ENCODE measurements at regions of chr20 and their contacts with region 1.

Region 1: GRCh38 chr20:56380375-56380774 is 11.6 kb downstream of the AURKA start:
- DNase-seq: no peak
- ATAC-seq: no peak
- H3K4me3 Mint-ChIP-seq: no peak overlapping the region
- H3K27ac Mint-ChIP-seq: no peak overlapping the region
- H3K4me1 Mint-ChIP-seq: peaks cover 9% of the 10 kb centered on the region
- H3K27me3 Mint-ChIP-seq: no peaks in the 10 kb centered on the region

Region 2: DNA sequence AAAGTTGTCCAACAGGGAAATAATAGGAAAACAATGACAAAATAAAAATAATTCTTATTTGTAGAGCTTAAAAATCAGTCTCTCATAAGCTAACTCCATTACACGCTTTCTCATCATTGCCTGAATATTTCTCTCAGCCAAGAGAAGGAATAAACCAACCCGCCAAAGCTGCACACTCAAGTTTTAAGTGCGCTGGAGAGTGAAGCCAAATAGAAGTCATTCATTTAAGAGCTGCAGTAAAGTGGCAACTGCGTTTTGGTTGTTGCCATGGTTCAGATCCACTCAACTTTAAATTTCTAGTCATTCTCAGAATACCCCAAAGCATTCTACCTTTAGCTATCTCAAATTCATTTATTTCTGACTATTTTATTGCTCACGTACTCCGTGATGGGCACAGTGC is 605.7 kb before region 1 on chr20:
- CTCF ChIA-PET with region 1: no interaction called
- POLR2A ChIA-PET with region 1: interaction called, 10 read pairs
- intact Hi-C with region 1: no loop called
- DNase-seq: no peak
- ATAC-seq: no peak
- H3K4me3 Mint-ChIP-seq: no peak overlapping the region
- H3K27ac Mint-ChIP-seq: no peak overlapping the region
- H3K4me1 Mint-ChIP-seq: no peaks in the 10 kb centered on the region
- H3K27me3 Mint-ChIP-seq: no peaks in the 10 kb centered on the region

Measured in activated CD4-positive, alpha-beta T cell treated with anti-CD3 and anti-CD28 coated beads for 36 hours (primary cell).